Posterior vena cava (tissue), 2 donors: ENCODE measurements at regions of chr10 and their contacts with region 1.

Region 1: GRCh38 chr10:81784111-81784597 is 90.8 kb upstream of the NRG3 start:
- DNase-seq: peak; percentile 76

Region 2: GRCh38 chr10:81806842-81807241 is 22.7 kb after region 1 on chr10:
- intact Hi-C with region 1: loop called in 1 of 2 experiments (anchors 2 kb)
- DNase-seq: no peak

Region 3: DNA sequence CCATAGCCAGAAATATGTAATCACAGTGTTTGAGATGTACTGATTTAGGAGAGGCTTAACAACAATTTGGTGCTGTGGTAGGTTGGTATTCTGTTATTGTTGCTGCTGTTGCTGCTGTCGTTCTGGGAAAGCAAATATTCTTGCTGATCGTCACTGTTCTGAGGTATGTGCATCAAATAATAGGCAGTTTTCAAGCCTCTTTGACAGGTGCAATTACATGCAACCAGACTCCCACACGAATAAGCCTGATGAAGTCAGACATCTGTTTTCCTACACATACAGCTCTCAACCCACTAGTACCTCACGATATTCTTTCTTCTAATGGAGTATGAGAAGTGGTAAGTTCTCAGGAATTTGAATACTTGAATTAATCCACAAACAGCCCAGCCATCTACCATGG is 44.1 kb after region 1 on chr10:
- intact Hi-C with region 1: no loop called
- DNase-seq: no peak

Region 4: GRCh38 chr10:81847675-81848074 is 63.5 kb after region 1 on chr10:
- intact Hi-C with region 1: loop called in 1 of 2 experiments (anchors 2 kb)
- DNase-seq: no peak

Region 5: DNA sequence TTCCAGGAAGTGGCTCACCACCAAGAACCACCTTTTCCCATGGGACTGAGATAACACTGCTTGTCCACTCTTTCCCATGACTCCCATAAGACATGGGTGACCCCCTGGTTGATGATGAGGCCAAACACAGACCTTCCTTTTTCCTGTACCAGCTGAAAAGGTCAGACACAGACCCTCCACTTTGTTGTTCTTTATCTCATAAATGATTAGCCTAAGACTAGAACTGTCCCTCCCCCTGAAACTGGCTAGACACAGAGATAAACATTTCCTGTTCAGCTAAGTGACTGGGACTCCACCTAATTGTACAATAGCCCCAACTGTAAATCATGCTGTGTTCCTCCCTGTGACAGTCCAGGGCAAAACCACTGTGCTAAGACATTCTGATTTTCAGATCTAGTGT is 82.6 kb after region 1 on chr10:
- intact Hi-C with region 1: no loop called
- DNase-seq: no peak